Ovary (tissue), 10 donors: ENCODE measurements at regions of chr5 and their contacts with region 1.

Region 1: DNA sequence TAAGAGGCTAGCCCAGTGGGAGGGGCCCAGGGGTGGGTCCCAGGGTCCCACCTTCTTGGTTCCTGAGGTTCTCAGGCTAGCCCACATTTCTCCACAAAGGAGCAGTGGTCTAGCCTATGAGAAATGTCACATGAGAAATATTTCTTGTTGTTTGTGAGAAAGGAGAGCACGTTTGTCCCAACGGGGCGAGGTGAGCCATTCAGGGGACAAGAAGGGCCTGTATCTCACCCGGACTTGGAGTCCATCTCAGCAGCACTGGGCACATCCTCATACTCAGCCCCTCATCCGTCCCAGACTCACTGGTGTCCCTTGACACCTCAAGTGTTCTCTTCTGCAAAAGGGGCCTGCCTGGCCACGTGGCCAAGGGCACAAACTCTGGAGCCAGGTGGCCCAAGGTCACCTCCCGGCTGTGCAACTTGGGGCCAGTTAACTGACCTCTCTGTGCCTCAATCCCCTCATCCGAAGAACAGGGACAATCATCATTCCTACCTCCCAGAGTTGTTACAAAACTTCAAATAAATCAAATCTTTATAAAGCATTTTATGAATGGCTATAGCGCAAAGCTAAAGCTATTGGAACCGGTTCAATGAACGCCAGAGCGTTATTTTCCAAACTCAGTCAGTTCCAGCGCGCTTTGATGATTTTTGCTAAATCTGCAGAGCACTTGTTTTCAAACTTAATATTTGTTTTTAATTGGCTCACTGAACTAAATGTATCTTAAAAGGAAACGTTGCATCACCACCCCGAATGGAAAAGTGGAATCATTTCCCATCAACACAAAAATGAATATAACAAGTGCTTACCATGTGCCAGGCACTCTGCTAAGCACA is 49.5 kb downstream of the DUSP1 start:
- DNase-seq: peak in 1 of 5 donors; percentile 74
- H3K4me3 ChIP-seq: no peak overlapping the region
- H3K27ac ChIP-seq: no peak overlapping the region
- H3K4me1 ChIP-seq: peaks cover 5% of the 10 kb centered on the region
- H3K27me3 ChIP-seq: no peaks in the 10 kb centered on the region
- CTCF ChIP-seq: no peak
- EP300 ChIP-seq: peak; percentile 91
- POLR2A ChIP-seq: no peak

Region 2: GRCh38 chr5:173057062-173057924 is 335.8 kb after region 1 on chr5:
- intact Hi-C with region 1: loop called in 1 of 4 experiments (anchors 10 kb)
- DNase-seq: peak; percentile 98 to 99 (median 99)
- H3K4me3 ChIP-seq: peak overlapping the region; percentile 98
- H3K27ac ChIP-seq: peak overlapping the region; percentile 99 to 100
- H3K4me1 ChIP-seq: no peaks in the 10 kb centered on the region
- H3K27me3 ChIP-seq: no peaks in the 10 kb centered on the region
- CTCF ChIP-seq: no peak
- EP300 ChIP-seq: no peak
- POLR2A ChIP-seq: no peak